ENCODE measurements at regions of chr19 and their contacts with region 1.

Region 1: GRCh38 chr19:7943444-7944176 is at the start of gene TIMM44:
- DNase-seq: peak; percentile 99
- H3K4me3 ChIP-seq: peak within 1 kb of the TSS; percentile 64 to 98
- H3K27ac ChIP-seq: peak within 1 kb of the TSS; percentile 97 to 98
- H3K4me1 ChIP-seq: peaks cover 9 to 10% of the 10 kb centered on the region in 2 donors
- H3K27me3 ChIP-seq: no peaks in the 10 kb centered on the region
- CTCF ChIP-seq: peak in 1 of 4 experiments; percentile 8
- POLR2A ChIP-seq: peak; percentile 51 to 65
- total RNA-seq, gene TIMM44: 41.1 to 117 (median 62.9) TPM

Region 2: GRCh38 chr19:7986321-7987083 is 42.9 kb after region 1 on chr19:
- intact Hi-C with region 1: no loop called
- DNase-seq: no peak
- H3K4me3 ChIP-seq: no peak overlapping the region
- H3K27ac ChIP-seq: peak overlapping the region in 1 of 2 donors; percentile 35
- H3K4me1 ChIP-seq: no peaks in the 10 kb centered on the region
- H3K27me3 ChIP-seq: no peaks in the 10 kb centered on the region
- CTCF ChIP-seq: no peak
- POLR2A ChIP-seq: no peak

Region 3: DNA sequence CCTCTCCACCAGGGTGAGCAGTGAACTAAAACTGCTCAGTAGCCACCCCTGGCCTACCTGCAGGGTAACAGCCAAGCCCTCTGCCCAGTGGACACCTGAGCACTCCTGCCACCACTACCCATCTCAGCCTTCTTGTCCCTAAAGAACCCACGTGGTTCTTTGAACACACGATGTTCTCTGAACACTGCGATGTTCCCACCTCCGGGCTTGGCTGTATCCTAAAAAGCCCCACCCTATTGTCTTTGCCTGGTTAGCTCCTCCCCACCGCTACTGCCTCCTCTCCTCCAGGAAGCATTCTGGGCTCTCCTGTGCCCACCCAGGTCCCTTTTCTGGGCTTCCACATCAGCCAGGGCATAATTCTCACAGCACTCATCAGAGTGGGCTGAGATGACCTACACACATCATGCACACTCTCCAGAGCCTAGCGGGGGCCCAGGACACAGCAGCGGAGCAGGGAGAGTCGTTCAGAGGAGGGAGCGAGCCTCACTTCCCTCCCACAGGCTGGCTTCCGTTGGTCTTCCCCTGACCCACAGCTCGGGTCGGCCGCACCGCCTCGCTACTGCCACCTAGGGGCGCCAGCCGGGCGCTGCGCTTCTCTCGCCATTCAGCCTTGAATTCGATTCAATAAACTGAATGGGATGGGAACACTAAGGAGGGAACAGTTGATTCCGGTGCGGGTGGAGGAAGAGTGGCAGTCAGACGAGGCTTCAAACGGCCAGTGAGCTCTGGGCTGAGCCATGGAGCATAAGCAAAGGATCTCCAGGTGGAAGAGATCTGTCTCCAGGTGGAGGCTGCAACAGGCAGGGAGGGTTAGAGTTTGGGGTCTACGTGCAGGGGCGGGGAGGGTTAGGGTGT is 58.6 kb after region 1 on chr19:
- intact Hi-C with region 1: loop called (anchors 5 kb)
- DNase-seq: peak; percentile 67 to 82
- H3K4me3 ChIP-seq: peak overlapping the region in 1 of 2 donors; percentile 15
- H3K27ac ChIP-seq: peak overlapping the region; percentile 57
- H3K4me1 ChIP-seq: peaks cover 4 to 26% of the 10 kb centered on the region in 2 donors
- H3K27me3 ChIP-seq: no peaks in the 10 kb centered on the region
- CTCF ChIP-seq: peak; percentile 92 to 98 (median 92)
- POLR2A ChIP-seq: no peak

Measured in uterus (tissue), 4 donors.